ENCODE measurements at regions of chr5 and their contacts with region 1.

Region 1: DNA sequence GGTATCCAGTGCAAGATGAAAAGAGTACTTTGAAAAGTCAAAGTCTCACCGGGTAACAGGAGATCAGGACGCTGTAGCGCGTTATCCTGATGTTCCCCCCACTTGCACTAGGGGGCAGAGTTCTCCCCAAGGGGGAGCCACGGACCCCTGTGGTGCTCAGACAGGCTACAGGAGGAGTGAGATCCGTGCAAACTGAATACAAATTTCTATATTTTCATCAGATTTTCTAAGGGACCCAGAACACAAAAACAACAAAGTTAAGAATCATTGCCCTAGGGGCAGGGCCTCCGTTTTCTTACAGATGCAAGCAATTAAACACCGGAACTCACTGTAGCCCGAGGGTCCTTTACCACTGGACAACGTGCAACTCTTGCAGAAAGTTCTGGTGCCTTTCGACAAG is 2.0 kb downstream of the MYO10 start:
- DNase-seq: peak; percentile 80 to 84
- ATAC-seq: peak; percentile 68 to 82; a peak in 5 of 6 replicates
- H3K4me3 ChIP-seq: peak overlapping the region; percentile 89
- H3K27ac ChIP-seq: peak overlapping the region; percentile 89 to 95
- H3K4me1 ChIP-seq: peaks cover 45% of the 10 kb centered on the region
- CTCF ChIP-seq: peak; percentile 95
- EP300 ChIP-seq: no peak
- POLR2A ChIP-seq: no peak
- RAD21 ChIP-seq: peak; percentile 76 to 82

Region 2: DNA sequence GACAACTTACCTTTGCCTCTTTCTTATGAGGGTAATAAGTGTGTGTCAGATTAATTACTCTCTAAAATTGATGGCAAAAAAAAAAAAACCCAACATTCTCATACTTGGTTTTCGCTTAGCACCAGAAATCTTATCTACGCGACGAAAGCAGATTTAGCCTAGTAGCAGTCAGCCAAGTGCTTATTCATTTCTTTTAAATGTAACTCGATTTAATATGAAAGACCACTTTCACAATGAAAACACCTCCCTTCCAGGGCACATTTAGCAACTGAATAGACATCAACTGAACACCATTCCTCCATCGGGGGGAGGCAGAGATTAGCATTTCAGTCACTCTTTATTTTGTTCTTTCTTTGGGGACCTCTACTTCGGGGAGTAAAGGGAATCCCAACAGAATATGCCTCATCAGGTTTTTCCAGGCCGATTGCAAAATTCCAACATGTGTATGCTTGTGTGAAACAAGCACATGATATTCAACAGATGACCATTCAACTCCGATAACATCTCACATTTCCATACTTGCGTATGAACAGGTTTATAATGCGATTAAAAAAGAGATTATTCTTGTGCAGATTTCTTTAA is 193.2 kb before region 1 on chr5:
- CTCF ChIA-PET with region 1: no interaction called
- POLR2A ChIA-PET with region 1: no interaction called
- DNase-seq: no peak
- ATAC-seq: no peak
- H3K4me3 ChIP-seq: no peak overlapping the region
- H3K27ac ChIP-seq: no peak overlapping the region
- H3K4me1 ChIP-seq: peaks cover 21% of the 10 kb centered on the region
- CTCF ChIP-seq: no peak
- EP300 ChIP-seq: no peak
- POLR2A ChIP-seq: no peak
- RAD21 ChIP-seq: no peak

Region 3: DNA sequence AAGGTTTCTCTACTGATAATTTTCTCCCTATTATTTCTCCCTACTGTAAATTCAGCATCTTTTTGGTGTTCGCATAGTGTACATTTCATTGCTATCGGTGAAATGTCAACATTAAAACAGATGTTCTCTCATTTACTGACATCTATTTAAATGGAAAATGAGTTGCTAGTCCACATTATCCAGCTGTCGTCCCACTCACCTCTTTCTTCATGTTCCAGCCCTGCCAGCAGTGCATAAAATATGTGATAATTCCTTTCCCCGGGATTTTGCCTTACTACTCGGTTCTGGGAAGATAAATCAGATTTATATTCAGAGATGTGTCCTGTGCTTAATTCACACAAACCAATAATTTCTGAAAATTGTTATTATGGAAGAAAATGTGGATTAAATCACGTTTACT is 153.8 kb before region 1 on chr5:
- CTCF ChIA-PET with region 1: no interaction called
- POLR2A ChIA-PET with region 1: no interaction called
- DNase-seq: no peak
- ATAC-seq: no peak
- H3K4me3 ChIP-seq: no peak overlapping the region
- H3K27ac ChIP-seq: no peak overlapping the region
- H3K4me1 ChIP-seq: peaks cover 26% of the 10 kb centered on the region
- CTCF ChIP-seq: no peak
- EP300 ChIP-seq: no peak
- POLR2A ChIP-seq: no peak
- RAD21 ChIP-seq: no peak

Region 4: DNA sequence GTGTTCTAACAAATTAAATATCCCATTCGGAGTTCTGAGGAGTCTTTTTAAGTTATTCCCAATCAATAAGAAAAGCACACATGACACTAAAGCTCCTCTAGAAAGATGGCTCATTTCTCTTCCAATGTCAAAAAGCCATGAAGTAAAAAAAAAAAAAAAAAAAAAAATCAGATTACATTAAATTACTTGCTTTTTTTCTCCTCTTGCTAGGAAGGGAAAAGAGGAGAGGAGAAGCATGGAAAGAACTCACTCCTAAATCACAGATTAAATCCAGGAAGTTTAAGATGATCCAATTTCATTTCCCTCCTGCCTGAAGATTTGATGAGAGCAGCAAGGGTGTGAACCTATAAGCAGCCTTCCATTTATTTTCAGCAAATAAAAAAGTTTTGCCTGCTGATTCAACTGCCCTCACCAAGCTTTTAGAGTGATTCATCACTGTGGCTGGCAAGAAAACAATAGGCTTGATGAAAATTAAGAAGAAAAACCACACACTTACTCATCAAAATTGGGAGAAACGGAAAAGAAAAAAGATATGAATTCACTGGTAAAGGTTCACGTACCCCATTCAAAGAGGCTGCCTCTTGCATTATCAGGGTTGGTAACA is 17.8 kb before region 1 on chr5:
- CTCF ChIA-PET with region 1: interaction called, 17 read pairs
- POLR2A ChIA-PET with region 1: no interaction called
- DNase-seq: peak in 1 of 2 experiments; percentile 66
- ATAC-seq: peak; percentile 46 to 51; a peak in 3 of 6 replicates
- H3K4me3 ChIP-seq: peak overlapping the region; percentile 14; the same call in 1 of the 3 replicates
- H3K27ac ChIP-seq: peak overlapping the region; percentile 75 to 82
- H3K4me1 ChIP-seq: peaks cover 92% of the 10 kb centered on the region
- CTCF ChIP-seq: no peak
- EP300 ChIP-seq: no peak
- POLR2A ChIP-seq: no peak
- RAD21 ChIP-seq: no peak

Region 5: DNA sequence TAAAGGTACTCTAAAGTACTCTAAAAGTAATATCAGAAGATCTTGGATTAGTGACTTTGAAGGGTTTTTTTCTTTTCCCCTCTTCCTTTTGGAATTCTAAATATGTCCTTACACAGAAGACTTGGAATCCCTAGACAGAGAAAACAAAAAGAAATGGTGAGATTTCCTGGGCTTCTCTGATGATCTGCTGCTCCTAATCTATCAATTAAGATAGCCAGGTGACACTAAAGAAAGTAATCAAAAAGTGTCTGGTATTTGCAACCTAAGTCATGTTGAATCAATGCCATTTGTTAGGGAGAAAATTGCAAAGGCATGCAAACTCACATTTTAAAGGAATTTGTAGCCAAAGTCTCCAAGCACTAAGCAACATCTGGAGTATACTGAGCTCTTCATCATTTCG is 31.5 kb after region 1 on chr5:
- CTCF ChIA-PET with region 1: no interaction called
- POLR2A ChIA-PET with region 1: no interaction called
- DNase-seq: no peak
- ATAC-seq: no peak
- H3K4me3 ChIP-seq: no peak overlapping the region
- H3K27ac ChIP-seq: no peak overlapping the region
- H3K4me1 ChIP-seq: no peaks in the 10 kb centered on the region
- CTCF ChIP-seq: no peak
- EP300 ChIP-seq: no peak
- POLR2A ChIP-seq: no peak
- RAD21 ChIP-seq: no peak

Region 6: GRCh38 chr5:17000291-17000939 is 66.3 kb after region 1 on chr5:
- CTCF ChIA-PET with region 1: interaction called, 3 read pairs
- POLR2A ChIA-PET with region 1: interaction called, 13 read pairs
- DNase-seq: peak; percentile 39 to 64
- ATAC-seq: peak; percentile 93 to 95
- H3K4me3 ChIP-seq: no peak overlapping the region
- H3K27ac ChIP-seq: peak overlapping the region; percentile 64 to 86
- H3K4me1 ChIP-seq: peaks cover 19% of the 10 kb centered on the region
- CTCF ChIP-seq: no peak
- EP300 ChIP-seq: no peak
- POLR2A ChIP-seq: no peak
- RAD21 ChIP-seq: 0 out of 5 replicates have a peak, but pooled peaks of 1 of the 2 experiments have one; percentile 12

Region 7: DNA sequence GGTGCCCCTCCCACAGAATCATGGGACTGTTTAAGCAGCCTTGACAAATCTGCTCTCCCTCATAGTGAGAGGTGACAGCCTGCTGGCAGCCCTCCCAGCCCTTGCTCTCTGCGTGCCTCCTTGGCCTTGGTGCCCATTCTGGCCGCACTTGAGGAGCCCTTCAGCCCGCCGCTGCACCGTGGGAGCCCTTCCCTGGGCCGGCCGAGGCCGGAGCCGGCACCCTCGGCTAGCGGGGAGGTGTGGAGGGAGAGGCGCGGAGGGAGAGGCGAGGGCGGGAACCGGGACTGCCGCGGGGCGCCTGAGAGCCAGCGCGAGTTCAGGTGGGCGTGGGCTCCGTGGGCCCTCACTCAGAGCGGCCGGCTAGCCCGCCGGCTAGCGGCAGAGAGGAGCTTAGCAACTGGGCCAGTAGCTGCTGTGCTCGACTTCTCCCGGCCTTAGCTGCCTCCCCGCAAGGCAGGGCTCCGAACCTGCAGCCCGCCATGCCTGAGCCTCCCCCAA is 127.9 kb after region 1 on chr5:
- CTCF ChIA-PET with region 1: interaction called, 21 read pairs
- POLR2A ChIA-PET with region 1: interaction called, 15 read pairs
- DNase-seq: peak; percentile 52 to 82
- ATAC-seq: peak; percentile 98 to 100
- H3K4me3 ChIP-seq: peak overlapping the region; percentile 42
- H3K27ac ChIP-seq: peak overlapping the region; percentile 80 to 89
- H3K4me1 ChIP-seq: peaks cover 32% of the 10 kb centered on the region
- CTCF ChIP-seq: peak; percentile 60
- EP300 ChIP-seq: no peak
- POLR2A ChIP-seq: no peak
- RAD21 ChIP-seq: peak; percentile 63 to 75

Region 8: DNA sequence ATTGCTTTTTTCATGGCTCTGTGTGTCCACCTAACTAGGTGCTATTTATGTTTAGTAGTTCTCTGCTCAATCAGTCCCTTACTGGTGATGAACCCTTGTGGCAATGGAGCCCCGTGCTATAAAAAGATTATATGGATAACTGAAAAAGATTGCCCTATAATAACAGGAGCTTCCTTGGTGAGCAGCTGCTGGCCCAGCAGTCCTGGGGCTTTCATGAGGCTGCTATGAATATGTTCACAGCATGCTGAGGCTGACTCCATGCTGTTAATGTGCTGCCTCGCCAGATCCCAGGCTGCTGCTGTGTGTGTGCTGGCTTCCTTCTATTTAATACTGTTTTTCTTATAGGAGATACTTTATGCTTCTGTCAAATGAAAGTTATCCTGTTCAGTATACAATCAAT is 1057.7 kb after region 1 on chr5:
- CTCF ChIA-PET with region 1: no interaction called
- POLR2A ChIA-PET with region 1: no interaction called
- DNase-seq: no peak
- ATAC-seq: no peak
- H3K4me3 ChIP-seq: no peak overlapping the region
- H3K27ac ChIP-seq: no peak overlapping the region
- H3K4me1 ChIP-seq: peaks cover 12% of the 10 kb centered on the region; the same call in 2 of the 3 replicates
- CTCF ChIP-seq: no peak
- EP300 ChIP-seq: no peak
- POLR2A ChIP-seq: no peak
- RAD21 ChIP-seq: no peak